ENCODE measurements at regions of chr3 and their contacts with region 1.

Region 1: GRCh38 chr3:157532529-157533297 is 29.5 kb upstream of the VEPH1 start:
- DNase-seq: no peak
- H3K4me3 Mint-ChIP-seq: no peak overlapping the region
- H3K27ac Mint-ChIP-seq: no peak overlapping the region
- H3K4me1 Mint-ChIP-seq: no peaks in the 10 kb centered on the region
- H3K27me3 Mint-ChIP-seq: peaks cover 6% of the 10 kb centered on the region

Region 2: GRCh38 chr3:157572559-157573270 is 40.0 kb after region 1 on chr3:
- intact Hi-C with region 1: loop called (anchors 1 kb)
- DNase-seq: no peak
- H3K4me3 Mint-ChIP-seq: no peak overlapping the region
- H3K27ac Mint-ChIP-seq: no peak overlapping the region
- H3K4me1 Mint-ChIP-seq: no peaks in the 10 kb centered on the region
- H3K27me3 Mint-ChIP-seq: peaks cover 8% of the 10 kb centered on the region